ENCODE measurements at regions of chr7 and their contacts with region 1.

Region 1: GRCh38 chr7:36048141-36048901 is 104.7 kb upstream of the EEPD1 start:
- DNase-seq: peak; percentile 93
- H3K4me3 ChIP-seq: no peak overlapping the region
- H3K27me3 ChIP-seq: no peaks in the 10 kb centered on the region; the same call in 1 of the 2 replicates
- CTCF ChIP-seq: no peak

Region 2: DNA sequence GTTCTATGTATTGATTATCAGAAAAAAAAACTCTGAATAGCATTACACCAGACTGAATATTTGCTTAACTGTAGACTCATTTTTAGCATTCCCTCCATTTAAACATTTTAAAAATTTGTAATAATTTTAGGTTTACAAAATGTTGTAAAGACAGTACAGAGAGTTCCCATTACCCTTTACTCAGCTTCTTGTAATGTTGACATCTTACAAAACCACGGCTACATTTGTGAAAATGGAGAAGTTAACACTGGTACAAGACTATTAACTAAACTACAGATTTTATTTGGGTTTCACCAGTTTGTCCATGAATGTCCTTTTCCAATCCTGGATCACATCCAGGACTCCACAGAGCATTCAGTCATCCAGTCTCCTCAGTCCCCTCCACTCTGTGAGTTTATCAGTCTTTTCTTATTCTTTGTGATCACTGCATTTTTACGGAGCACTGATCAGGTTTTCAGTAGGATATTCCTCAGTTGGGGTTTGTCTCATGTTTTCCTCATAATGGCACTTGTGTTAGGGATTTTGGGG is 25.2 kb before region 1 on chr7:
- CTCF ChIA-PET with region 1: no interaction called
- POLR2A ChIA-PET with region 1: no interaction called
- DNase-seq: no peak
- H3K4me3 ChIP-seq: no peak overlapping the region
- H3K27me3 ChIP-seq: no peaks in the 10 kb centered on the region; the same call in 1 of the 2 replicates
- CTCF ChIP-seq: no peak

Region 3: GRCh38 chr7:36062154-36062815 is 14.0 kb after region 1 on chr7:
- CTCF ChIA-PET with region 1: interaction called, 14 read pairs
- POLR2A ChIA-PET with region 1: no interaction called
- DNase-seq: no peak
- H3K4me3 ChIP-seq: no peak overlapping the region
- H3K27me3 ChIP-seq: peaks cover 1% of the 10 kb centered on the region; the same call in 1 of the 2 replicates
- CTCF ChIP-seq: no peak

Region 4: DNA sequence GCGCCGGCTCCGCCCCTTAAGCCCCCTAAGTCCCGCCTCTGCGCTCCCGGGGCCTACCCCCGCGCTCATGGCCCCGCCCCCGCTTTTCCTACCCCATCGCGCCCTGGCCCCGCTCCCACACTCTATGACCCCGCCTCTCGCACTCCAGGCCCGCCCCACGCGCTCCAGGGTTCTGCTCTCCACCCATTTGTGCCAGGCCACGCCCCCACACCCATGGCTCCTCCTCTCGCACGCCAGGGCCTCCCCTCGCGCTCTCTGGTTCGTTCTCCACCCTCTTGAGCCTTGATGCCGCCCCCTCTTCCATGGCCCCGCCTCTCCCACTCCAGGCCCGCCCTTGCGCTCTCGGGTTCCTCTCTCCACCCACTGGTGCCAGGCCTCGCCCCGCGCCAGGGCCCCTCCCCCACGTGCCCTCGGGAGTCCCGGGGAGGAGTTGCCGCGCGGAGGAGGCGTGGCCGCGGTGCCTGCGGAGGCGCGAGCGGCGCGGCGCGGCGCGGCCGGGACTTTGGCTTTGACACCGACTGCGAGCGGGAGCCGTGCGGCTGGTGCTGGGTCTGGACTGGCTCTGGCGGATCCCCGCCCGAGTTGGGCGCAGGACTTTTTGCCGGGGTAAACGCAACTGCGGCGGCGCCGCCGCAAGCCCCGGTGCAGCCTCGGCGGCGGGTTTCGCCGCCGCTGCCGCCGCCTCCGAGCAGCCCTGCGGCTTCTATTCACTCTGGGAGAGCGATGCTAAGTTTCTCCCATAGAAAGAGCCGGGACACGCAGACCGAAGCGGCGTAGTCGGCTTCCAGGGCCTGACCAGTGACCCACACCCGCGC is 104.6 kb after region 1 on chr7 and contains the start of gene EEPD1:
- CTCF ChIA-PET with region 1: no interaction called
- POLR2A ChIA-PET with region 1: no interaction called
- DNase-seq: peak; percentile 92
- H3K4me3 ChIP-seq: peak within 1 kb of the TSS; percentile 75
- H3K27me3 ChIP-seq: no peaks in the 10 kb centered on the region
- CTCF ChIP-seq: no peak
- polyA plus RNA-seq, gene EEPD1: 1.6 and 2.5 TPM in 2 replicates

Region 5: DNA sequence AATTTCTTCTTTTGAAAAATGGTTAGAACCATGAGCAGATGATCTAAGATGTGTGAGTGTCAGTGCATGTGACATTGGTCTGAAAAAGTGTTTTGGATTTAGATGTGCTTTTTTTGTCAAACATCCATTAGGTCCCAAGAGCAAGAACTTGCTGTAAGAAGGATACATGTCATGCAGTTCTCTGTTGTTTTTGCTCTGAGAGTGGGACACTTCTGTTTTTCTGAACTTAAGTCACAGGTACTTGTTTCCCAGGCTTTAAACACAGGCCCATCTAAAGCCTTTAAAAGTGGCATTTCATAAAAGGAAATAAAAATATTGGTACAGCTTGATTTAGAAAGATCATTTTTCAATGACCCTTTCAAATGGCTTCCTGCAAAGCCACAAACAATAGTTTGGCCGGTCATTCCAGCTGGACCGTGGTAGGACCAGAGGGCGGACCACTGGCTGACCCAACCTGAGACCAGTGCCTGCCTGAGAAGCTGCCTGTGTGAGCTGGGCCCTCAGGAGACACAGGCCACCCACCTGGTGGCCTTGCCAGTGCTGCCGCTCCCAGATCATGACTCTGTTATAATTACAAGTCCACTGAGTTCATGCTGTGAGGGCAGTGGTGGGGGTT is 197.5 kb after region 1 on chr7:
- CTCF ChIA-PET with region 1: no interaction called
- POLR2A ChIA-PET with region 1: no interaction called
- DNase-seq: no peak
- H3K4me3 ChIP-seq: no peak overlapping the region
- H3K27me3 ChIP-seq: no peaks in the 10 kb centered on the region
- CTCF ChIP-seq: no peak

Region 6: DNA sequence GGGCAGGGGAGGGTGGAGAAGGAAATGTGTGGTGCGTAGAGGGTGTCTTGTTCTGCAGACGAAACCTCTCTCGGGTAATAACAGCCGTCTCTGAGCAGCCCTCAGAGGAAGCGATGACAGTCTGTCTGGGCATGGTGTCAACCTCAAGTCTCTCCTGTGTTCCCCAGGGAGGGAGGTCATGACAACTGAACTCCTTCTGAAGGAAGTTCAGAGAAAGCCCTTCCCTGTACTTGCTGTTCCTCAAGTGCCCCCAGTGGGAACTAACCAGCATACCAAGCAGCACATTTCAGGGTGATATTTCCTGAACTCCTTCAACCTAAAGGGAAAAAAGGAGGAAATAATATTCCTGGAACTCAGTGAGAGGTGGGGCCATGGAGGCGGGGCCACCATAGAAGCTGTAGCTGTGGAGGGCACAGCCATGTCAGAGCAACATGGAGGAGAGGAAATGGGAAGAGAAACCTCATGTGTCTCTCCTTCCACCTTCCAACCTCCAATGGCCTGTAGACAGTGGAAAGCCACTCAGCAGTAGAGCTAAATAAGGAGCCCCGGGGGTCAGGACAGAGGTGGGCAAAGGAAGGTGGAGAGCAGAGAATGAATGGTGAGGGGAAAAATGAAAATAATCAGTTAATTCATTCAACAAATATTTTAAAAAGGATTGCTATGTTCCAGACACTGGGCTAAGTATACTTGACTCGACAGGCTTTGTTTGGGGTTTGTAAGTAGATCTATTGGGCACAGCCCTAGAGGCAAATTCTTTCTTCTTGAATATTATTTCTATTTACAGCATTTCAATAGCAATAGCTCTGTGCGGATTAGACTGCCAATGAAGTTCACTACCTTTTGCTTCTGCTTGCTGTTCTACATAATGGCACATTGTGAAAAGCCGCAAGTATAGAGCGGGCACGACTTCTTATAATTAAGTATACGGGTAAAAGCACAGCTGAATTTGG is 736.9 kb after region 1 on chr7:
- CTCF ChIA-PET with region 1: no interaction called
- POLR2A ChIA-PET with region 1: no interaction called
- DNase-seq: no peak
- H3K4me3 ChIP-seq: no peak overlapping the region
- H3K27me3 ChIP-seq: no peaks in the 10 kb centered on the region
- CTCF ChIP-seq: no peak